ENCODE measurements at regions of chr7 and their contacts with region 1.

Region 1: GRCh38 chr7:99579956-99580777 is 17.9 kb upstream of the TMEM225B start:
- H3K4me3 Mint-ChIP-seq: peak overlapping the region; percentile 69
- H3K27ac Mint-ChIP-seq: no peak overlapping the region
- H3K4me1 Mint-ChIP-seq: peaks cover 16% of the 10 kb centered on the region
- H3K27me3 Mint-ChIP-seq: peaks cover 31% of the 10 kb centered on the region

Region 2: GRCh38 chr7:99504603-99505323 is 75.4 kb before region 1 on chr7 and contains the start of gene ZKSCAN5:
- intact Hi-C with region 1: no loop called
- H3K4me3 Mint-ChIP-seq: peak within 1 kb of the TSS; percentile 84
- H3K27ac Mint-ChIP-seq: peak within 1 kb of the TSS; percentile 93
- H3K4me1 Mint-ChIP-seq: peaks cover 16% of the 10 kb centered on the region
- H3K27me3 Mint-ChIP-seq: no peaks in the 10 kb centered on the region

Region 3: GRCh38 chr7:99525713-99526440 is 54.3 kb before region 1 on chr7:
- intact Hi-C with region 1: no loop called
- H3K4me3 Mint-ChIP-seq: no peak overlapping the region
- H3K27ac Mint-ChIP-seq: no peak overlapping the region
- H3K4me1 Mint-ChIP-seq: peaks cover 12% of the 10 kb centered on the region
- H3K27me3 Mint-ChIP-seq: no peaks in the 10 kb centered on the region

Region 4: DNA sequence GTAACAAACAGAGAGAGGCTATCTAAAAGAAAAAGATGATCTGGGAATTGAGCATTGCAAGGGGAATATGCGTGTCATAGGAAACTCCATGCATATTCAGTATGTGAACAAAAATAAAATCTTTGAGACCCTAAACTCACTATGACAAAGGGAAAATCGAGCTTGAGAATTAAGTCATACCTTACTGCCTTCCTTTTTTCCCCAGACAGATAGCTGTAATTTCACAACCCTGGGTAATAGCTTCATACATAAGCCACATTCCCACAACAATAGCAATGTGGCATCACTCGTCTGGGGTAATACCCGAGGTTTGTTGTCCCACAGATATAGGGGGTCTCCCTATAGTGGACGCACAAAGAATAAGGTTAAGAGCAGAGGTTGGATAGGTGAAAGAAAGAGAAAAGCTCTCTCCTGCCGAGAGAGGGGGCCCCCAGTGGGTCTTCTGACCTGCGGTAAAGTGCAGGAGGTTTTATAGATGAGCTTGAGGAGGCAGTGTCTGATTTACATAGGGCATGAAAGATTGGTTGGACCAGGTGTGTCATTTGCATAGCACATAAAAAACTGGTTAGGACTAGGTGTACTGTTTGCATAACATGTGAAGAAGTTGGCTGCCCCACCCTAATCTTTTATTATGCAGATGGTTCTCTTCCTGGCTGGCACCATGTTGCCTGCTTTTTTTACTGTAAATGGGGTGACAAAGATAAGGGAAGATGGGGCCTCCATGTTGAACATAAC is 259.3 kb after region 1 on chr7:
- intact Hi-C with region 1: loop called (anchors 10 kb)
- H3K4me3 Mint-ChIP-seq: no peak overlapping the region
- H3K27ac Mint-ChIP-seq: no peak overlapping the region
- H3K4me1 Mint-ChIP-seq: peaks cover 13% of the 10 kb centered on the region
- H3K27me3 Mint-ChIP-seq: no peaks in the 10 kb centered on the region